A673 (cell line): ENCODE measurements at regions of chr2 and their contacts with region 1.

Region 1: DNA sequence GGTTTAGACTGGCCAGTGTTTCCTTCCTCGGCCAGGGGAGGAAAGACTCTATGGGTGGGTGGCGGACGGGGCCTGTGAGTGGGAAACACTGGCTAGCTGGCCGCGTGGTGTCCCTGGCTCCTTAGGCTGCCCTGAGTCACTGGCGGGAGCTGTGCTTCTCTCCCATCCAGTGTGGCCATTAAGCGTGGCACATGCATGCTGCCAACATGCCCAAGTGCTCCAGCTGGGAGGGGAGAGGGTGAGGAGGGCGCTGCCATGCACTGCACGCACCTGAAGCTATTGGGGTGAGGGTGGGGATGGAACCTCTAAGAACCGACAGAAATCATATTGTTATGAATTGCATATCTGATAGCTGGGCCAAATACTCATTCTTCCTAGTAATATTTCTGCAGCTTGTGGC is 270.8 kb downstream of the CALCRL start:
- DNase-seq: no peak
- H3K4me3 ChIP-seq: no peak overlapping the region
- H3K27ac ChIP-seq: no peak overlapping the region
- H3K4me1 ChIP-seq: no peaks in the 10 kb centered on the region
- H3K27me3 ChIP-seq: no peaks in the 10 kb centered on the region
- CTCF ChIP-seq: no peak

Region 2: DNA sequence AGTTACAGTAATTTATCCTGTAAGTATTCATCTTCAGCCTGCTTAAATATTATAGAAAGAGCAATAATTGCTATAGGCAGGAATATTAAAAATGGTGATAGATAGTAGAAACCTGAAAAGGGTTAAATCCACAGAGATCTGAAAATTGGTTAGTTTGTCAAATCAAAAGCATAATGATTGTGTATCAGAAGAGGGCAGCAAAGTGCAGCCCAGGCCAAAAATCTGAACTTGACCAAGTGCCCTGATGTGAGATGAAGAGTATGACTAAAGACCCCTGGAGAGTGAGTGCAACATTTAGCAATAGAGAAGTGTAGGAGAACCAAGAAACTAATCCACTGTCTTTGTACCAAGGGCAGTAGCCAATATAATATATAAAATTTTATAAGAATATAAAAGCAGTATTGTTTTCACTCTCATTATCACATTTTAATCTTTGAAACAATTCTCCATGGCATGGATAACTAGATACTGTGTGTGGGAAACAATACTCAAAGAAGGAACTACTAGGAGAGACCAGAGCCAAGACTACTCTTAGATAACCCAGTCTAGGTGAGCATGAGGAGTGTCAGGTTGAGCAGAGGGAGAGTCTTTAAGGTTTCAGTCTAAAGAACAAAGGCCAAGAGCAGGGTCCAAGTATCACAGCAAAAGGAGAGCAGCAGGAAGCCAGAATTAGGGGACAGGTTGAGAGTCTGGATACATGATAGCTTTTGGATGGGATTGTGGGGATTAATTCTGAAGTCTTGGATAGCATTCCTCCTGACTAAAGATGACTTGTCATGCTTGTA is 122.1 kb after region 1 on chr2:
- CTCF ChIA-PET with region 1: no interaction called
- POLR2A ChIA-PET with region 1: no interaction called
- intact Hi-C with region 1: loop called (anchors 5 kb)
- DNase-seq: peak; percentile 50
- H3K4me3 ChIP-seq: no peak overlapping the region
- H3K27ac ChIP-seq: no peak overlapping the region
- H3K4me1 ChIP-seq: peaks cover 27% of the 10 kb centered on the region
- H3K27me3 ChIP-seq: no peaks in the 10 kb centered on the region
- CTCF ChIP-seq: peak; percentile 39